SK-N-SH (cell line): ENCODE measurements at regions of chr3 and their contacts with region 1.

Region 1: DNA sequence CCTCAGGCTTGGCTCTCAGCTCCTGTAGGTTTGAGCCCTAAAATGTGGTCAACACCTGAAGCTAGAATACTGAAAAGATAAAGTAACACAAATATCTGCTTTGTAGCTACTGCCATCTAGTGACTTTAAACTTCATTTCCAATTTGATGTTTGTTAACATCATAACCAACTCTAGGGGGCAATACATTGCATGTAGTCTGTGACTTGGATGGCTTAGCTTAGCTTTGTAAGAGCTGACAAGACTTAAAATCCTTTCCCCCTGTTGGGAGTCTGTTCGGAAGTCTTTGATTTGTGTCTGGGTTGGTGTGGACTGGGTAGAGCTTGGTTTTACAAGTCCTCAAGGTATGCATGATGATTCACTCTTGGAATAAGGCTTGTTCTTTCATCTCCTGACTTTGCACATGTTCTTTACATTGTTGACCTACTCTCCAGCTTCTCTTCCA is 51.7 kb downstream of the SCN11A start:
- DNase-seq: peak; percentile 60
- H3K4me3 ChIP-seq: peak overlapping the region in 1 of 2 experiments; percentile 36; a peak in 1 of 4 replicates
- H3K27ac ChIP-seq: no peak overlapping the region
- H3K4me1 ChIP-seq: no peaks in the 10 kb centered on the region
- H3K27me3 ChIP-seq: no peaks in the 10 kb centered on the region
- CTCF ChIP-seq: peak; percentile 88
- EP300 ChIP-seq: no peak
- RAD21 ChIP-seq: peak; percentile 86

Region 2: GRCh38 chr3:38496131-38496910 is 503.7 kb before region 1 on chr3 and contains the start of gene EXOG:
- CTCF ChIA-PET with region 1: interaction called, 19 read pairs
- POLR2A ChIA-PET with region 1: no interaction called
- DNase-seq: peak; percentile 98
- H3K4me3 ChIP-seq: peak within 1 kb of the TSS; percentile 55 to 75
- H3K27ac ChIP-seq: peak within 1 kb of the TSS; percentile 59 to 77; a peak in 3 of 4 replicates
- H3K4me1 ChIP-seq: peaks cover 0 to 4% of the 10 kb centered on the region in 2 experiments; a peak in 3 of 4 replicates
- H3K27me3 ChIP-seq: no peaks in the 10 kb centered on the region
- CTCF ChIP-seq: peak; percentile 91
- EP300 ChIP-seq: peak in 1 of 2 experiments; percentile 13; a peak in 1 of 4 replicates
- RAD21 ChIP-seq: peak; percentile 81
- polyA plus RNA-seq, gene EXOG: 6.2 and 8.8 TPM in 2 replicates

Region 3: GRCh38 chr3:38792983-38793382 is 207.0 kb before region 1 on chr3:
- CTCF ChIA-PET with region 1: no interaction called
- POLR2A ChIA-PET with region 1: no interaction called
- DNase-seq: no peak
- H3K4me3 ChIP-seq: no peak overlapping the region
- H3K27ac ChIP-seq: no peak overlapping the region
- H3K4me1 ChIP-seq: no peaks in the 10 kb centered on the region
- H3K27me3 ChIP-seq: no peaks in the 10 kb centered on the region
- CTCF ChIP-seq: no peak
- EP300 ChIP-seq: no peak
- RAD21 ChIP-seq: no peak

Region 4: GRCh38 chr3:38843898-38844297 is 156.1 kb before region 1 on chr3:
- CTCF ChIA-PET with region 1: interaction called, 29 read pairs
- POLR2A ChIA-PET with region 1: interaction called, 4 read pairs
- DNase-seq: peak; percentile 54
- H3K4me3 ChIP-seq: no peak overlapping the region
- H3K27ac ChIP-seq: no peak overlapping the region
- H3K4me1 ChIP-seq: peaks cover 0 to 2% of the 10 kb centered on the region in 2 experiments; a peak in 2 of 4 replicates
- H3K27me3 ChIP-seq: no peaks in the 10 kb centered on the region; the same call in 1 of the 2 replicates
- CTCF ChIP-seq: peak; percentile 67
- EP300 ChIP-seq: no peak
- RAD21 ChIP-seq: peak; percentile 91

Region 5: DNA sequence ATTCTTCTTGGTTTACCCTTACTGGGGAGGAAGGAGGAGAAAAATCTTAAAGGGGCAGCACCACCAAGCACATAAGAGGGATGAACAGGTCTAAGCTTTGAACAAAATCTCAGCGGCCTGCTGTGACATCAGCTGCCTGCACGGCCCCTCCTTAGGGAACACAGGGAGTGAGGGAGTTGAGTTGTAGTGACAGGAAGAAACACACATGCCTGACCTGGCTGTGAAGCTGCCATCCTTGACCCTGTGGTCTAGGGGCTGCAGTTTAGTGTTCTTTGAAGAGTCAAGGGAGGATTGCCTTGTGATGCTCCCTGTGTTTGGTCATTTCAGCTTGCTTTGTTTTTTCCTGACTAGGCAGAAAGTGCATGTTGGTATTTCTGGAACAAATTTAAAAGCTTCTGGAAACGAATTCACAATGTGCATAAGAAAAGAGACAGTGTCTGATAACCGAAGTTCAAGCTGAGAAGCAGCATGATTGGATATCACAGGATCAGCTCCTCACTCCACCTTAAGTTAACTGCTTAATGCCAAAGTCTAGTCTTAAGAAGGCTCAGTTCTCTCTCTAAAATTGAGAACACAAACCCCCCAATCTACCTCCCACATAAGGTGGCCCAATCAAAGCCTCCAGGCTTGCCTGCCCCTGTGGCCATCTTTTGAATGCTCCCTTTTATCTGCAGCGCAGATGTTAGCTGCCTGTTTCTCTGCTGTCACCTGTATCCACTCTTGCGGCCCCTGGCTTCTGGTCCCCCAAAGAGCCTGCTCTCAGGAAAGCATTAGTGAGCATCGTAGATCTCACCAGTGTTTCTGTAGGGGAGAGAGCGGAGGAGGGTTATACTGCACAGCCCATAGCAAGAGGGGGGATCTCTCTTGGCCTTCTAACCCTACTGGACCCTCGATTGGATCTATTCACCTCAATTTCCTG is 30.5 kb before region 1 on chr3:
- CTCF ChIA-PET with region 1: interaction called, 17 read pairs
- POLR2A ChIA-PET with region 1: no interaction called
- DNase-seq: no peak
- H3K4me3 ChIP-seq: no peak overlapping the region
- H3K27ac ChIP-seq: no peak overlapping the region
- H3K4me1 ChIP-seq: no peaks in the 10 kb centered on the region; a peak in 1 of 4 replicates
- H3K27me3 ChIP-seq: no peaks in the 10 kb centered on the region
- CTCF ChIP-seq: no peak
- EP300 ChIP-seq: no peak
- RAD21 ChIP-seq: no peak

Region 6: DNA sequence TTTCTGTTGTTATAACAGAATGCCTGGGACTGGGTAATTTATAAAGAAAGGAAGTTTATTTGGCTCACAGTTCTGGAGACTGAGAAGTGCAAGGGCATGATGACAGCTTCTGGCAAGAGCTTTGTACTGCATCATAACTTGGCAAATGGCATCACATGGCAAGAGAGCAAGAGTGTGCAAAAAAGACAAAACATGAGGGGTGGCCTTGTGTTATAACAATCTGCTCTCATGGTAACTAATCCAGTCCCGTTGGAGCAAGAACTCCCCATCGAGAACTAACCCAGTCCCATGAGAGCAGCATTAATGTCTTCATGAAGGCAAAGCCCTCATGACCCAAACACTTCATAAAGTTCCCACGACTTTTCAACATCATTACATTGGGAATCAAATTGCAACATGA is 28.5 kb after region 1 on chr3:
- CTCF ChIA-PET with region 1: interaction called, 58 read pairs
- POLR2A ChIA-PET with region 1: interaction called, 3 read pairs
- DNase-seq: no peak
- H3K4me3 ChIP-seq: no peak overlapping the region
- H3K27ac ChIP-seq: no peak overlapping the region
- H3K4me1 ChIP-seq: no peaks in the 10 kb centered on the region
- H3K27me3 ChIP-seq: no peaks in the 10 kb centered on the region; the same call in 1 of the 2 replicates
- CTCF ChIP-seq: no peak
- EP300 ChIP-seq: no peak
- RAD21 ChIP-seq: no peak